ENCODE measurements at regions of chr1 and their contacts with region 1.

Region 1: DNA sequence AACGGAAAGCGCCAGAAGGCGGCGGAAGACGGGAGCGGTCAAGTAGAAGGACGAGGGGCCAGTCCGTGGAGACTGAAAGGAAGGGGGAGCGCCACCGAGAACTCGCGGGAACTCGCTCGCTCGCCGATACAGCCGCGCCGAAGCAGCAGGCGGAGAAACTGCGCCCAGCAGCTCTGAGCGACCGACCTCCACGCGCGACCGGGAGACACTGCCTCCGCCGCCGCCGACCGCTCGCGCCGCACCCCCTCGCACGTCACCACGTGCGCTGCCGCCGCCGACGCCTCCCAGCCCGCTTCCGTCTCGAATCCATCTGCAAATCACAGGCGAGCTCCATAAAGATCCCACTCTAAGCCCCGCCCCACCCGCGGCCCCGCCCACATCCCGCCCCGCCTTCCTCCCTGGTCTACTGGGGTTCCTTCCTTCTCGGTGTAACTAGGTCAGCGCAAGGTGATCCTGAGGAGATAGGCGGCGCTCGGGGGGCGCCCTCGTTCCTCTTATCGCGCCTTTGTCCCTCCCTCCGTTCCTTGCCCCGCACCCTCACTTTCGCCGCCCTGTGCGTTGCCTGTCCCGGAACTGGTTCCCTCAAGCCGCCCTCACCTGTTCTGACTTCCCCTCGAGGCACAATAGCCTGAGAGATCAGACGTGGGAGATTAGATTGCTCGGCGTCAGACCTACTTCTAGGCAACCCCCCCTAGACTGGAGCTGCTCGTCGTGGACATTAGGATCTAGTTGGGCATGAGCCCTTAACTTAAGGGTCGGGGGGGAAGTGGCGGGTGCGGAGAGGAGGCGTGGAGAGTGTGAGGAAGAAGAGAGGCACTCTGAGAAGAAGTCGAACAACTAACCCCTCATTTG is at the start of gene IVNS1ABP:
- DNase-seq: peak; percentile 90
- ATAC-seq: peak; percentile 73
- H3K4me3 Mint-ChIP-seq: peak within 1 kb of the TSS; percentile 97
- H3K27ac Mint-ChIP-seq: peak within 1 kb of the TSS; percentile 98
- H3K4me1 Mint-ChIP-seq: peaks cover 49% of the 10 kb centered on the region
- H3K27me3 Mint-ChIP-seq: no peaks in the 10 kb centered on the region
- CTCF ChIP-seq: no peak
- total RNA-seq, gene IVNS1ABP: 130 and 149 TPM in 2 replicates

Region 2: DNA sequence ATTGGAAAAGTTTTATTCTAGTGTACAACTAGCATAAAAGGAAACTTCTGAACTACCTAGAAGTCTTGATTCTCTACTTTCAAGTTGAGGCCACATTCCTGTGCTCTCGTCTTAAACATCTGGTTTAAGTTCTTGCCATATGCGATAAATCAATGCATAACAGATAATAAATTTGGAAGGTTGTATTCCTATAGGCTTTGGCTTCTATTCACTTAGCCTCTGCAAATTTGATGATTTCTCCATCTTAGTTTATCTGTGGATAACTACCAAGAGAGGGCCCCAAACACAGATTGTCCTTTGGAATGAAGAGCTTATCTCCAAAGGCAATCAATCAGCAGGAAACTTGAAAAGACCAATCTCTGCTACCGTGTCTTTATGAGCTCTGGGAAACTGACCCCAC is 283.6 kb before region 1 on chr1:
- CTCF ChIA-PET with region 1: no interaction called
- POLR2A ChIA-PET with region 1: no interaction called
- intact Hi-C with region 1: no loop called
- DNase-seq: no peak
- ATAC-seq: no peak
- H3K4me3 Mint-ChIP-seq: no peak overlapping the region
- H3K27ac Mint-ChIP-seq: no peak overlapping the region
- H3K4me1 Mint-ChIP-seq: no peaks in the 10 kb centered on the region
- H3K27me3 Mint-ChIP-seq: peaks cover 13% of the 10 kb centered on the region
- CTCF ChIP-seq: no peak

Region 3: GRCh38 chr1:185156854-185157598 is 160.2 kb before region 1 on chr1 and contains the starts of genes SWT1 and TRMT1L:
- CTCF ChIA-PET with region 1: interaction called, 4 read pairs
- POLR2A ChIA-PET with region 1: interaction called, 37 read pairs
- intact Hi-C with region 1: loop called (anchors 1 kb)
- DNase-seq: peak; percentile 97
- ATAC-seq: peak; percentile 85
- H3K4me3 Mint-ChIP-seq: peak within 1 kb of the TSS; percentile 99
- H3K27ac Mint-ChIP-seq: peak within 1 kb of the TSS; percentile 100
- H3K4me1 Mint-ChIP-seq: peaks cover 50% of the 10 kb centered on the region
- H3K27me3 Mint-ChIP-seq: no peaks in the 10 kb centered on the region
- CTCF ChIP-seq: no peak
- total RNA-seq, gene SWT1: 4.9 and 5.5 TPM in 2 replicates
- total RNA-seq, gene TRMT1L: 20.0 and 23.9 TPM in 2 replicates

Region 4: GRCh38 chr1:185404291-185404690 is 87.0 kb after region 1 on chr1:
- CTCF ChIA-PET with region 1: interaction called, 6 read pairs
- POLR2A ChIA-PET with region 1: interaction called, 23 read pairs
- intact Hi-C with region 1: loop called (anchors 1 kb)
- DNase-seq: no peak
- ATAC-seq: no peak
- H3K4me3 Mint-ChIP-seq: no peak overlapping the region
- H3K27ac Mint-ChIP-seq: no peak overlapping the region
- H3K4me1 Mint-ChIP-seq: peaks cover 45% of the 10 kb centered on the region
- H3K27me3 Mint-ChIP-seq: no peaks in the 10 kb centered on the region
- CTCF ChIP-seq: no peak

Region 5: GRCh38 chr1:185559684-185560331 is 242.5 kb after region 1 on chr1:
- CTCF ChIA-PET with region 1: interaction called, 8 read pairs
- POLR2A ChIA-PET with region 1: interaction called, 43 read pairs
- intact Hi-C with region 1: loop called (anchors 1 kb)
- DNase-seq: no peak
- ATAC-seq: peak; percentile 90
- H3K4me3 Mint-ChIP-seq: no peak overlapping the region
- H3K27ac Mint-ChIP-seq: peak overlapping the region; percentile 74
- H3K4me1 Mint-ChIP-seq: peaks cover 27% of the 10 kb centered on the region
- H3K27me3 Mint-ChIP-seq: no peaks in the 10 kb centered on the region
- CTCF ChIP-seq: no peak

Region 6: GRCh38 chr1:185608177-185608576 is 290.9 kb after region 1 on chr1:
- CTCF ChIA-PET with region 1: no interaction called
- POLR2A ChIA-PET with region 1: interaction called, 68 read pairs
- intact Hi-C with region 1: loop called (anchors 1 kb)
- DNase-seq: no peak
- ATAC-seq: peak; percentile 83
- H3K4me3 Mint-ChIP-seq: no peak overlapping the region
- H3K27ac Mint-ChIP-seq: peak overlapping the region; percentile 26
- H3K4me1 Mint-ChIP-seq: peaks cover 63% of the 10 kb centered on the region
- H3K27me3 Mint-ChIP-seq: no peaks in the 10 kb centered on the region
- CTCF ChIP-seq: no peak

Region 7: DNA sequence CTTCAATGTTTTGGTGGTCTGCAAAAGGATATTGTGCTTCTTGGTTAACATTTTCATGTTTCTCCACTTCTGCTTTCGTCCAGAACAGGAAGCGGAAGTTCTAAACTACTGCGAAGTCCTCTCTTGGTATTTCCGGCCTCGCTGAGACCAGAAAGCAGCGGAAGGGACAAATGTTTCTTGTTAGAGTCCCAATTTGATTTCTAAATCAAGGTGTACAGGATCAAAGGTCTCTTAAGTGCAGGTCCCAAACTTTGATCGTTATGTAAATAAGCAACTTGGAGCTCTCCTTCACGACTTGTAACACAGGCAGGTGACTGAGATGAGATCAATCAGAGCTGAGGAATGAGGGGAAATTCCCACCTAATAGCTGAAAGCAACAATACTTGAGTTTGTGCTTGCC is 376.8 kb after region 1 on chr1:
- CTCF ChIA-PET with region 1: interaction called, 9 read pairs
- POLR2A ChIA-PET with region 1: interaction called, 46 read pairs
- intact Hi-C with region 1: loop called (anchors 1 kb)
- DNase-seq: no peak
- ATAC-seq: peak; percentile 82
- H3K4me3 Mint-ChIP-seq: peak overlapping the region; percentile 86
- H3K27ac Mint-ChIP-seq: peak overlapping the region; percentile 98
- H3K4me1 Mint-ChIP-seq: peaks cover 22% of the 10 kb centered on the region
- H3K27me3 Mint-ChIP-seq: peaks cover 9% of the 10 kb centered on the region
- CTCF ChIP-seq: no peak

Measured in activated B cell treated with CpG ODN at 0.5 μM for 24 hours (primary cell).